Panc1 (cell line): ENCODE measurements at regions of chr5 and their contacts with region 1.

Region 1: GRCh38 chr5:76191826-76192490 is 108.8 kb downstream of the SV2C start:
- DNase-seq: no peak
- ATAC-seq: no peak
- H3K4me3 ChIP-seq: no peak overlapping the region
- H3K27ac ChIP-seq: no peak overlapping the region
- H3K4me1 ChIP-seq: no peaks in the 10 kb centered on the region
- H3K27me3 ChIP-seq: peaks cover 28% of the 10 kb centered on the region
- CTCF ChIP-seq: no peak

Region 2: GRCh38 chr5:76273206-76273885 is 81.4 kb after region 1 on chr5:
- CTCF ChIA-PET with region 1: interaction called, 10 read pairs
- POLR2A ChIA-PET with region 1: no interaction called
- in situ Hi-C with region 1: no loop called
- intact Hi-C with region 1: no loop called
- DNase-seq: no peak
- ATAC-seq: no peak
- H3K4me3 ChIP-seq: no peak overlapping the region
- H3K27ac ChIP-seq: no peak overlapping the region
- H3K4me1 ChIP-seq: no peaks in the 10 kb centered on the region
- H3K27me3 ChIP-seq: peaks cover 6% of the 10 kb centered on the region
- CTCF ChIP-seq: no peak